SK-N-SH (cell line): ENCODE measurements at regions of chr17 and their contacts with region 1.

Region 1: DNA sequence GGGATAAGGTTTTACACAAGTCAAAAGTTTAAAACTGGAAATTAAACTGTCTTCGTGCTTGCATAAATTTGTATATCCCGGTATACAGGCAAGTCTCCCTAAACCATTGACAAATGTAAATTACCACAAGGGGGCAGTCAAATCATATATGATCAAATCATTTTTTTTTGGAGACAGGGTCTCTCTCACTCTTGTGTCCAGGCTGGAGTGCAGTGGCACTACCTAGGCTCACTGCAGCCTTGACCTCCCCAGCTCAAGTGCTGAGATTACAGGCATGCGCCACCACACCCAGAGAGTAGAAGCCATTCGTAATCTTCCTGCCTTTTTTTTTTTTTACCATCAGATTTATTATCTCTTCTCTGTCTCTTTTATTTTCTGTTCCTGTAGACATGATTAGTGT is 18.5 kb downstream of the TOP2A start:
- DNase-seq: peak; percentile 48
- H3K4me3 ChIP-seq: no peak overlapping the region
- H3K27ac ChIP-seq: peak overlapping the region in 1 of 2 experiments; percentile 19; a peak in 1 of 4 replicates
- H3K4me1 ChIP-seq: no peaks in the 10 kb centered on the region; a peak in 1 of 4 replicates
- H3K27me3 ChIP-seq: no peaks in the 10 kb centered on the region
- CTCF ChIP-seq: peak; percentile 64
- EP300 ChIP-seq: no peak
- RAD21 ChIP-seq: peak; percentile 69

Region 2: GRCh38 chr17:40387680-40388079 is 11.5 kb before region 1 on chr17:
- CTCF ChIA-PET with region 1: interaction called, 11 read pairs
- POLR2A ChIA-PET with region 1: no interaction called
- DNase-seq: no peak
- H3K4me3 ChIP-seq: no peak overlapping the region
- H3K27ac ChIP-seq: no peak overlapping the region
- H3K4me1 ChIP-seq: no peaks in the 10 kb centered on the region
- H3K27me3 ChIP-seq: no peaks in the 10 kb centered on the region
- CTCF ChIP-seq: no peak
- EP300 ChIP-seq: no peak
- RAD21 ChIP-seq: no peak

Region 3: GRCh38 chr17:40410082-40410481 is 10.9 kb after region 1 on chr17:
- CTCF ChIA-PET with region 1: interaction called, 18 read pairs
- POLR2A ChIA-PET with region 1: interaction called, 3 read pairs
- DNase-seq: no peak
- H3K4me3 ChIP-seq: no peak overlapping the region
- H3K27ac ChIP-seq: 0 out of 4 replicates have a peak overlapping the region, but pooled peaks of 1 of the 2 experiments have one; percentile 0
- H3K4me1 ChIP-seq: no peaks in the 10 kb centered on the region
- H3K27me3 ChIP-seq: no peaks in the 10 kb centered on the region
- CTCF ChIP-seq: no peak
- EP300 ChIP-seq: no peak
- RAD21 ChIP-seq: no peak

Region 4: GRCh38 chr17:40463122-40463550 is 64.0 kb after region 1 on chr17:
- CTCF ChIA-PET with region 1: no interaction called
- POLR2A ChIA-PET with region 1: no interaction called
- DNase-seq: no peak
- H3K4me3 ChIP-seq: no peak overlapping the region
- H3K27ac ChIP-seq: peak overlapping the region in 1 of 2 experiments; percentile 92; a peak in 1 of 4 replicates
- H3K4me1 ChIP-seq: peaks cover 25 to 53% of the 10 kb centered on the region in 2 experiments
- H3K27me3 ChIP-seq: no peaks in the 10 kb centered on the region
- CTCF ChIP-seq: no peak
- EP300 ChIP-seq: no peak
- RAD21 ChIP-seq: no peak

Region 5: DNA sequence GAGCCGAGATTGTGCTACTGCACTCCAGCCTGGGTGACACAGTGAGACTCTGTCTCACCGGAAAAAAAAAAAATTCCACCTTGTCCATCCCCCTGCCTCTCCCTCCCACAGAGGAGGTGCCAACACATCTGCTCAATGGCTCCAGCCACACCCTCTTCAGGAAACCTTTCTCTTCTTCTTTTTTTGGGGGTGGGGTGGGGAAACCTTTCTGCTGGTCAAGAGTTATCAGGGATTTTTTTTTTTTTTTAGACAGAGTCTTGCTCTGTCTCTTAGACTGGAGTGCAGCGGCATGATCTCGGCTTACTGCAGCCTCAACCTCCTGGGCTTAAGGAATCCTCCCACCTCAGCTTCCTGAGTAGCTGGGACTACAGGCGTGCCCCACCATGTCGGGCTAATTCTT is 83.5 kb after region 1 on chr17:
- CTCF ChIA-PET with region 1: no interaction called
- POLR2A ChIA-PET with region 1: no interaction called
- DNase-seq: no peak
- H3K4me3 ChIP-seq: no peak overlapping the region
- H3K27ac ChIP-seq: no peak overlapping the region
- H3K4me1 ChIP-seq: peaks cover 11 to 23% of the 10 kb centered on the region in 2 experiments; a peak in 2 of 4 replicates
- H3K27me3 ChIP-seq: no peaks in the 10 kb centered on the region
- CTCF ChIP-seq: no peak
- EP300 ChIP-seq: no peak
- RAD21 ChIP-seq: no peak